IMR-90 (cell line): ENCODE measurements at regions of chr1 and their contacts with region 1.

Region 1: GRCh38 chr1:168121401-168122011 is 15.2 kb downstream of the GPR161 start:
- DNase-seq: peak; percentile 88
- ATAC-seq: peak; percentile 90
- H3K4me3 ChIP-seq: no peak overlapping the region
- H3K27ac ChIP-seq: peak overlapping the region; percentile 6; the same call in 1 of the 2 replicates
- H3K4me1 ChIP-seq: peaks cover 8% of the 10 kb centered on the region
- H3K27me3 ChIP-seq: no peaks in the 10 kb centered on the region
- CTCF ChIP-seq: no peak
- POLR2A ChIP-seq: no peak
- RAD21 ChIP-seq: no peak

Region 2: GRCh38 chr1:168157638-168158037 is 36.1 kb after region 1 on chr1:
- CTCF ChIA-PET with region 1: no interaction called
- POLR2A ChIA-PET with region 1: no interaction called
- dilution Hi-C with region 1: no loop called
- in situ Hi-C with region 1: no loop called
- intact Hi-C with region 1: loop called (anchors 1 kb)
- DNase-seq: no peak
- ATAC-seq: no peak
- H3K4me3 ChIP-seq: no peak overlapping the region
- H3K27ac ChIP-seq: no peak overlapping the region
- H3K4me1 ChIP-seq: no peaks in the 10 kb centered on the region
- H3K27me3 ChIP-seq: no peaks in the 10 kb centered on the region
- CTCF ChIP-seq: no peak
- POLR2A ChIP-seq: no peak
- RAD21 ChIP-seq: no peak

Region 3: GRCh38 chr1:168373869-168374268 is 252.4 kb after region 1 on chr1:
- CTCF ChIA-PET with region 1: no interaction called
- POLR2A ChIA-PET with region 1: no interaction called
- dilution Hi-C with region 1: no loop called
- in situ Hi-C with region 1: no loop called
- intact Hi-C with region 1: no loop called
- DNase-seq: no peak
- ATAC-seq: no peak
- H3K4me3 ChIP-seq: no peak overlapping the region
- H3K27ac ChIP-seq: no peak overlapping the region
- H3K4me1 ChIP-seq: no peaks in the 10 kb centered on the region
- H3K27me3 ChIP-seq: no peaks in the 10 kb centered on the region; the same call in none of the 2 replicates
- CTCF ChIP-seq: no peak
- POLR2A ChIP-seq: no peak
- RAD21 ChIP-seq: no peak